Activated T-helper 2 cell treated with anti-CD3 and anti-CD28 coated beads, Interferon-gamma antibody, Interleukin-2, Interleukin-4, amounts not matched to agents 10 μg/mL and 5 μg/mL and 100 μg/mL, durations not matched to agents 14 hours and 24 hours and 36 hours (primary cell): ENCODE measurements at regions of chr4 and their contacts with region 1.

Region 1: GRCh38 chr4:95165926-95166524 is 382.7 kb downstream of the UNC5C start:
- DNase-seq: peak; percentile 26
- H3K4me3 Mint-ChIP-seq: no peak overlapping the region
- H3K27ac Mint-ChIP-seq: no peak overlapping the region
- H3K4me1 Mint-ChIP-seq: peaks cover 14% of the 10 kb centered on the region
- H3K27me3 Mint-ChIP-seq: peaks cover 5% of the 10 kb centered on the region

Region 2: GRCh38 chr4:95095348-95095974 is 70.6 kb before region 1 on chr4:
- intact Hi-C with region 1: no loop called
- DNase-seq: no peak
- H3K4me3 Mint-ChIP-seq: no peak overlapping the region
- H3K27ac Mint-ChIP-seq: no peak overlapping the region
- H3K4me1 Mint-ChIP-seq: no peaks in the 10 kb centered on the region
- H3K27me3 Mint-ChIP-seq: peaks cover 14% of the 10 kb centered on the region

Region 3: DNA sequence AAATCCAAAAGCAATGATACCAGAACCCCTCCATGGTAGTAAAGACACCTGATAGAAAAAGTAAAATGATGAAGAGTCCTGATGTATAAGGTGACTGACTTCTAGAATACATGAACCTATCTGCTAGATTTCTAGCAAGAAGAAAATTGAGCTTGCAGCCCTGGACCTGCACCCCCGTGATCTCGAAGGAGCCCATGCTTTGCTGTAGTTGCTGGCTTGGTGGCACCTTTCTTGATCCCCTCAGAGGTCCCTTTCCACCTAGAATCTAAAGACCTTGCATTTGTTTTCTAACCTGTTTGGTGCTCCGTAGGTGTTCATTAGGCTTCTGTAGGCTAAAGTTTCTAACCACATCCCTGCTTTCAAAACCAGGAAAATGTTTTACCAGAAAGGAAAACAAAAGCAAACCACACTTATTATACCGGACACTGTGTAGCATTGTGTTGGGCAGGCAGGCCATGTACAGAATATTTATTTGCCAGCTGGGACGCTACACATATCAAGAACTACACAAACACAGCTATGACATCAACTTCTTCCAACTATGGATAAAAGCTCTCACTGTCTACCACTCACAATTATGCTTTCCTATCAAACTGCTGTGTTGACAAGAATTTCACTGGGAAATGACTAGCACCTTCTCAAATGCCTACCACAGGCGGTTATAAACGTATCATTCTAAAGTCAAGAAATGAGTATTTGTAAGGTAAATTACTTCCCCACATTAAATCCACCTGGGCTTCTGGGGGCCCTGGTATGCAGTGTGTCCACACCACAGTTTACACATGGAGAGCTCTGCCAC is 66.5 kb after region 1 on chr4:
- intact Hi-C with region 1: no loop called
- DNase-seq: no peak
- H3K4me3 Mint-ChIP-seq: no peak overlapping the region
- H3K27ac Mint-ChIP-seq: no peak overlapping the region
- H3K4me1 Mint-ChIP-seq: peaks cover 11% of the 10 kb centered on the region
- H3K27me3 Mint-ChIP-seq: no peaks in the 10 kb centered on the region

Region 4: DNA sequence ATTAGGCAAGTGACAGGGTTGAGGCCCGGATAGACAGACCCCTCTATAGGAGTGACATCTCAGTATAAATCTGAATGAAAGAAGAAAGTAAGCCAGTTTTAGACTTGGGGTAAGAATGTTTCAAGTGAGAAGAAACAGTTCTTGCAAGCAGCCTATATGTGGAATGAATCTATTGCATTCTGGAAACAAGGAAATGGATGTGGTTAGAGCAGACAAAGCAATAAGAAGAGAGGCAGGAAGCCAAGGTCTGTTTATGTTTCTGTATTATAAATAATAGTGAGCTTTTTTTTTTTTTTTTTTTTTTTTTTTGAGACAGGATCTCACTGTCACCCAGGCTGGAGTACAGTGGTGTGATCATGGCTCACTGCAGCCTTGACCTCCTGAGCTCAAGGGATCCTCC is 127.0 kb after region 1 on chr4:
- intact Hi-C with region 1: loop called (anchors 5 kb)
- DNase-seq: no peak
- H3K4me3 Mint-ChIP-seq: no peak overlapping the region
- H3K27ac Mint-ChIP-seq: no peak overlapping the region
- H3K4me1 Mint-ChIP-seq: peaks cover 36% of the 10 kb centered on the region
- H3K27me3 Mint-ChIP-seq: no peaks in the 10 kb centered on the region

Region 5: DNA sequence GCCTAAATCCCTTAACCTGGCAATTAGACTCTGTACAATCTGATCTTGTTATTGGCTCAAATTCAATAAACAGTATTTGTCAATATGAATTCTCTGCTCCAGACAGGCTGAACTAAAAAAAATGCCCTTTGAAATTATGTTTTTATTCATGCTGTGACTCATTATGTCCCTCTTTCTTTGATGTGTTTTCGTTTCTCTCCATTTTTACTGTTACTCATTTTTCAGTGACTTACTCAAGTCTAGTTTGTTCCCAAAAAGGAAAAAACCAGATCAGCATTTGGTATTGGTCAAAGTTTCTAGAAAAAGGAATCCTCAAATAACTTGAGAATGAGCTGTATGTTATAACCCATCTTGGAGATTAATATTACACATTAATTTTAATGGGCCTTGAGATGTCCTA is 342.4 kb after region 1 on chr4:
- intact Hi-C with region 1: loop called (anchors 2 kb)
- DNase-seq: no peak
- H3K4me3 Mint-ChIP-seq: no peak overlapping the region
- H3K27ac Mint-ChIP-seq: no peak overlapping the region
- H3K4me1 Mint-ChIP-seq: peaks cover 1% of the 10 kb centered on the region
- H3K27me3 Mint-ChIP-seq: peaks cover 16% of the 10 kb centered on the region

Region 6: DNA sequence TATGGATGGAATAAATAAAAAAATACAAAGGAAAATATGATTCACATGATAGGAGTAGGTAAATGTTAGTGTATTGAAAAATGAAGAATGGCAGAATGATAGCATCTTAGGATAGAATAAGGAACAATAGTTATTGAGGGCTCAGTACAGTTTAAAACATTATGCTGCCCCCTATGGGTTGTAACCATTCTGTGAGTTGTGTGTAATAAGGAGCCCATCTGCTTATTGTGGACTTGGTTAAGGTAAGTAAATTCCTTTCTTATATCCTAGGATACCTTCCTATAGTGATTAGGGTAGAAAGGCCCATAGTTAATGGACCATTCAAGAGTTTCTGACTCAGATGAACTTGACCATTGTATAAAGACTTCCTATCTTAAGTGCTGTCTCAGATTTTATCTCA is 869.7 kb after region 1 on chr4:
- intact Hi-C with region 1: loop called (anchors 5 kb)
- DNase-seq: no peak
- H3K4me3 Mint-ChIP-seq: no peak overlapping the region
- H3K27ac Mint-ChIP-seq: no peak overlapping the region
- H3K4me1 Mint-ChIP-seq: no peaks in the 10 kb centered on the region
- H3K27me3 Mint-ChIP-seq: no peaks in the 10 kb centered on the region